Naive thymus-derived CD4-positive, alpha-beta T cell (primary cell): ENCODE measurements at regions of chr19 and their contacts with region 1.

Region 1: DNA sequence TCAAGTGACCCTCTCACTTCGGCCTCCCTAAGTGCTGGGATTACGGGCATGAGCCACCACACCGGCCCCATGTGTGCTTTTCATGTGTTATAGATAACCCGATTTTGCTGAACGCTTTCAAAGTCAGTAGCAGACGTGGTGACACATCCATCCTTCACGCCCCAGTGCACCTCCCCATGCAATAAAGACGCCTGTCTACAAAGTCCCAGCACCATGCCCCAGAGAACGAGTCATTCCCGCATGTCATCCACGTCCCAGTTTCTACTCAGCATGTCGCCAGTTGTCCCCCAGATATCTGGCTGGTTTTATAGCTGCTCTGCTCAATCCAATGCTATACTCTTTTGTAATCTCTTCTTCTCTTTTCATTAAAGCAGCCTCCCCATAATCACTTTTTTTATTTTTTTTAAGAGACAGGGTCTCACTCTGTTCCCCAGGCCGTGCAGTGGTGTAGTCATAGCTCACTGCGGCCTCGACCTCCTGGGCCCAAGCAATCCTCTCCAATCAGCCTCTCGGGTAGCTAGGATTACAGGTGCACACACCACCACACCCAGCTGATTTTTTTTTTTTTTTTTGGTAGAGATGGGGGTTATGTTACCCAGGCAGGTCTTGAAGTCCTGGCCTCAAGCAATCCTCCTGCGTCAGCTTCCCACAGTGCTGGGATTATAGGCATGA is 42.5 kb downstream of the DNM2 start:
- DNase-seq: peak in 1 of 9 donors; percentile 57
- ATAC-seq: no peak
- H3K4me3 ChIP-seq: no peak overlapping the region
- H3K4me3 Mint-ChIP-seq: peak overlapping the region; percentile 60 to 86 (median 82)
- H3K27ac ChIP-seq: peak overlapping the region; percentile 70
- H3K27ac Mint-ChIP-seq: peak overlapping the region; percentile 83 to 99 (median 94)
- H3K4me1 ChIP-seq: peaks cover 62 to 79% of the 10 kb centered on the region in 2 donors
- H3K4me1 Mint-ChIP-seq: peaks cover 69 to 92% (median 84%) of the 10 kb centered on the region in 7 donors
- H3K27me3 ChIP-seq: no peaks in the 10 kb centered on the region
- H3K27me3 Mint-ChIP-seq: peaks cover 0 to 2% (median 0%) of the 10 kb centered on the region in 5 donors

Region 2: GRCh38 chr19:10730923-10731322 is 29.5 kb before region 1 on chr19:
- CTCF ChIA-PET with region 1: no interaction called
- POLR2A ChIA-PET with region 1: interaction called, 10 read pairs
- intact Hi-C with region 1: loop called (anchors 1 kb)
- DNase-seq: no peak
- ATAC-seq: no peak
- H3K4me3 ChIP-seq: no peak overlapping the region
- H3K4me3 Mint-ChIP-seq: peak overlapping the region in 9 of 10 donors; percentile 30 to 85 (median 78)
- H3K27ac ChIP-seq: peak overlapping the region; percentile 59
- H3K27ac Mint-ChIP-seq: peak overlapping the region; percentile 91 to 99 (median 97)
- H3K4me1 ChIP-seq: peaks cover 23 to 24% of the 10 kb centered on the region in 2 donors
- H3K4me1 Mint-ChIP-seq: peaks cover 26 to 71% (median 53%) of the 10 kb centered on the region in 7 donors
- H3K27me3 ChIP-seq: no peaks in the 10 kb centered on the region
- H3K27me3 Mint-ChIP-seq: no peaks in the 10 kb centered on the region

Region 3: GRCh38 chr19:10797541-10798256 is 37.3 kb after region 1 on chr19:
- CTCF ChIA-PET with region 1: no interaction called
- POLR2A ChIA-PET with region 1: interaction called, 3 read pairs
- intact Hi-C with region 1: loop called in 1 of 2 experiments (anchors 1 kb)
- DNase-seq: peak; percentile 27 to 89 (median 64)
- ATAC-seq: peak; percentile 90
- H3K4me3 ChIP-seq: peak overlapping the region; percentile 39
- H3K4me3 Mint-ChIP-seq: peak overlapping the region; percentile 56 to 82 (median 74)
- H3K27ac ChIP-seq: peak overlapping the region; percentile 80
- H3K27ac Mint-ChIP-seq: peak overlapping the region; percentile 93 to 97 (median 94)
- H3K4me1 ChIP-seq: peaks cover 25 to 39% of the 10 kb centered on the region in 2 donors
- H3K4me1 Mint-ChIP-seq: peaks cover 8 to 51% (median 16%) of the 10 kb centered on the region in 7 donors
- H3K27me3 ChIP-seq: no peaks in the 10 kb centered on the region
- H3K27me3 Mint-ChIP-seq: no peaks in the 10 kb centered on the region

Region 4: GRCh38 chr19:10835754-10836477 is 75.5 kb after region 1 on chr19 and contains the start of gene TMED1:
- CTCF ChIA-PET with region 1: no interaction called
- POLR2A ChIA-PET with region 1: interaction called, 5 read pairs
- intact Hi-C with region 1: loop called (anchors 1 kb)
- DNase-seq: peak; percentile 81 to 97 (median 93)
- ATAC-seq: peak; percentile 92
- H3K4me3 ChIP-seq: peak within 1 kb of the TSS; percentile 98
- H3K4me3 Mint-ChIP-seq: peak within 1 kb of the TSS; percentile 82 to 99 (median 96)
- H3K27ac ChIP-seq: peak within 1 kb of the TSS; percentile 93
- H3K27ac Mint-ChIP-seq: peak within 1 kb of the TSS; percentile 98 to 100 (median 99)
- H3K4me1 ChIP-seq: peaks cover 8 to 13% of the 10 kb centered on the region in 2 donors
- H3K4me1 Mint-ChIP-seq: peaks cover 12 to 20% (median 15%) of the 10 kb centered on the region in 7 donors
- H3K27me3 ChIP-seq: no peaks in the 10 kb centered on the region
- H3K27me3 Mint-ChIP-seq: no peaks in the 10 kb centered on the region
- total RNA-seq, gene TMED1: 7.6 to 12.8 (median 9.9) TPM

Region 5: GRCh38 chr19:10891405-10892086 is 131.1 kb after region 1 on chr19:
- CTCF ChIA-PET with region 1: no interaction called
- POLR2A ChIA-PET with region 1: no interaction called
- intact Hi-C with region 1: no loop called
- DNase-seq: no peak
- ATAC-seq: no peak
- H3K4me3 ChIP-seq: no peak overlapping the region
- H3K4me3 Mint-ChIP-seq: no peak overlapping the region
- H3K27ac ChIP-seq: no peak overlapping the region
- H3K27ac Mint-ChIP-seq: peak overlapping the region in 1 of 9 donors; percentile 21
- H3K4me1 ChIP-seq: no peaks in the 10 kb centered on the region
- H3K4me1 Mint-ChIP-seq: peaks cover 8 to 26% (median 12%) of the 10 kb centered on the region in 7 donors
- H3K27me3 ChIP-seq: no peaks in the 10 kb centered on the region
- H3K27me3 Mint-ChIP-seq: no peaks in the 10 kb centered on the region